Right lobe of liver (tissue), 6 donors: ENCODE measurements at regions of chr22 and their contacts with region 1.

Region 1: GRCh38 chr22:22327723-22328122 is 83.1 kb downstream of the VPREB1 start:
- DNase-seq: no peak
- ATAC-seq: peak in 1 of 4 donors; percentile 18
- H3K4me3 ChIP-seq: no peak overlapping the region
- H3K27ac ChIP-seq: no peak overlapping the region
- H3K4me1 ChIP-seq: no peaks in the 10 kb centered on the region
- H3K27me3 ChIP-seq: peaks cover 0 to 9% of the 10 kb centered on the region in 2 donors
- CTCF ChIP-seq: no peak
- POLR2A ChIP-seq: no peak

Region 2: DNA sequence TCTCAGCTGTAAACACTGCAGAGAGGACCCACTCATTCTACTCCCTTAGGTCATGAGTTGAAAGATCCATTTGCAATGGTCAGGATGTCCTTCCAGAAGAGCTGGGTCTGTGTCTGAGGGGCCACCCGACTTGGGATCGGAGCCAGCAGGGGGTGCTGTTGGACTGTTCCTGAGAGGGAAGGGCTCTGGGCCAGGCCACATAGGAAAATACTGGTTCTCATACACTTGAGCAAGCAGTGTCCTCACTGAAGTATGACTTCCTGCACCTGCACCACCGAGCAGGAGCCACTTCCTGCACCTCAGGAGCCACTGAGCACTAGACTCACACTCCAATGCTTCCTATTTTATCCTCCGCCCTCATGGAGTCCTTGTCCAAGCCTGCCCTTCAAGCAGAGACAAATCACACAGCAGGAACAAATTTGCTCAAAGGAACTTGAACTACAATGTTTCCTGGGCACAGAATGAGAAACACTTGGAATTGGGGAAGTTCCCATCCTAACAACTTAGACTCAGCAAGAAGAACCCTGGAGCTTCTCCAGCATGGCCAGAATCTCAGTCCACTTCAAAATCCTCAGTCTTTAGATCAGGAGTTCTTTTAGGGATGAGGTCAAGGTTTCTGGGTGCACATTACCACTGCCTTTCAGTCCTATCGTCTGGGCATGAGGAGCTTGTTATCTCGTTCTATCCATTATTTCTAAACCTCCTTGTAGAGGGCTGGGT is 119.7 kb before region 1 on chr22:
- intact Hi-C with region 1: loop called in 1 of 2 experiments (anchors 10 kb)
- DNase-seq: peak in 2 of 3 donors; percentile 68 to 73
- ATAC-seq: peak; percentile 66 to 94 (median 93)
- H3K4me3 ChIP-seq: no peak overlapping the region
- H3K27ac ChIP-seq: no peak overlapping the region
- H3K4me1 ChIP-seq: no peaks in the 10 kb centered on the region
- H3K27me3 ChIP-seq: no peaks in the 10 kb centered on the region
- CTCF ChIP-seq: peak; percentile 61 to 69 (median 65)
- POLR2A ChIP-seq: no peak

Region 3: GRCh38 chr22:22463855-22464540 is 136.3 kb after region 1 on chr22:
- intact Hi-C with region 1: no loop called
- DNase-seq: peak in 1 of 3 donors; percentile 52
- ATAC-seq: peak; percentile 61 to 67 (median 66)
- H3K4me3 ChIP-seq: no peak overlapping the region
- H3K27ac ChIP-seq: no peak overlapping the region
- H3K4me1 ChIP-seq: no peaks in the 10 kb centered on the region
- H3K27me3 ChIP-seq: no peaks in the 10 kb centered on the region
- CTCF ChIP-seq: peak; percentile 70 to 78 (median 73)
- POLR2A ChIP-seq: no peak